HCT116 (cell line): ENCODE measurements at regions of chr17 and their contacts with region 1.

Region 1: DNA sequence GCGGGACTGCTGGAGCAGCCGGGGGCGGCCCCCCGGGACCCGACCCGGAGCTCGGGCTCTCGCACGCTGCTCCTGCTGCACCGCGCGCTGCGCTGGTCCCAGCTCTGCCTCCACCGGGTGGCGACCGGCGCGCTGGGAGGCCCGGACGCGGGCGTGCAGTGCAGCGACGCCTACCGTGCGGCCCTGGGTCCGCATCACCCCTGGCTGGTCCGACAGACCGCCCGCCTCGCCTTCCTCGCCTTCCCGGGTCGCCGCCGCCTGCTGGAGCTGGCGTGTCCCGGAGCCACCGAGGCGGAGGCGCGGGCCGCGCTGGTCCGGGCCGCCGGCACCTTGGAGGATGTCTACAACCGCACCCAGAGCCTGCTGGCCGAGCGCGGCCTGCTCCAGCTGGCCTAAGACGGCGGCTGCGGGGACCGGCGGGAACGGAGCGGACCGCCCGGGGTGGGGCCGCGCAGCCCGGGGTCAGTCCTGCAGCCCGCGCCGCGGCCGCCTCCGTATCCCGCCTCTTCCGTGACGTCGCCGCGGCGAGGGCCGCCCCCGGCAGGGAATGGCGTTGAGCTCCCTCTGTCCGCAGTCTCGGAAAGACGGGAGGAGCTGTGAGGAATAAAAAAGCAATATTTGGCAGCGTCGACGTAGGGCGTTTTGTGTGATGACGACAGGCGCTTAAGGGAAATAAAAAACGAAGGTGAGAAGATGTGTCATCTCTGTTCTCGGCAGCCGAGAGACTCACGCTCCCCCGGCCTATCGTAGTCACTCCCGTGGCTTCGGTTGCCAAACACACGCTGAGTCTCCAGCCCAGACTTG is 1.3 kb downstream of the GLTPD2 start:
- DNase-seq: peak; percentile 88
- ATAC-seq: peak; percentile 90
- H3K4me3 ChIP-seq: peak overlapping the region; percentile 61 to 66
- H3K27ac ChIP-seq: peak overlapping the region; percentile 98
- H3K4me1 ChIP-seq: peaks cover 25 to 36% of the 10 kb centered on the region in 2 experiments
- H3K27me3 ChIP-seq: no peaks in the 10 kb centered on the region
- CTCF ChIP-seq: peak; percentile 50 to 92 (median 74); a peak in 5 of 6 replicates
- POLR2A ChIP-seq: peak; percentile 77
- RAD21 ChIP-seq: peak; percentile 51

Region 2: GRCh38 chr17:4565209-4566141 is 224.6 kb before region 1 on chr17:
- CTCF ChIA-PET with region 1: interaction called, 11 read pairs
- POLR2A ChIA-PET with region 1: no interaction called
- RAD21 ChIA-PET with region 1: no interaction called
- intact Hi-C with region 1: no loop called
- DNase-seq: peak; percentile 84
- ATAC-seq: peak; percentile 84
- H3K4me3 ChIP-seq: no peak overlapping the region
- H3K27ac ChIP-seq: no peak overlapping the region
- H3K4me1 ChIP-seq: peaks cover 3 to 16% of the 10 kb centered on the region in 2 experiments; a peak in 3 of 4 replicates
- H3K27me3 ChIP-seq: no peaks in the 10 kb centered on the region
- CTCF ChIP-seq: peak; percentile 82 to 90 (median 86)
- POLR2A ChIP-seq: no peak
- RAD21 ChIP-seq: peak; percentile 59

Region 3: GRCh38 chr17:4709794-4710692 is 80.1 kb before region 1 on chr17 and contains the start of gene ARRB2:
- CTCF ChIA-PET with region 1: interaction called, 12 read pairs
- POLR2A ChIA-PET with region 1: no interaction called
- RAD21 ChIA-PET with region 1: interaction called in 1 of 2 experiments, 4 read pairs
- intact Hi-C with region 1: no loop called
- DNase-seq: peak; percentile 96
- ATAC-seq: peak; percentile 88
- H3K4me3 ChIP-seq: peak within 1 kb of the TSS; percentile 65 to 73
- H3K27ac ChIP-seq: peak within 1 kb of the TSS; percentile 64
- H3K4me1 ChIP-seq: peaks cover 13 to 45% of the 10 kb centered on the region in 2 experiments; a peak in 3 of 4 replicates
- H3K27me3 ChIP-seq: no peaks in the 10 kb centered on the region
- CTCF ChIP-seq: peak; percentile 45 to 70 (median 59)
- POLR2A ChIP-seq: no peak
- RAD21 ChIP-seq: peak; percentile 83
- total RNA-seq, gene ARRB2: 70.8 TPM

Region 4: DNA sequence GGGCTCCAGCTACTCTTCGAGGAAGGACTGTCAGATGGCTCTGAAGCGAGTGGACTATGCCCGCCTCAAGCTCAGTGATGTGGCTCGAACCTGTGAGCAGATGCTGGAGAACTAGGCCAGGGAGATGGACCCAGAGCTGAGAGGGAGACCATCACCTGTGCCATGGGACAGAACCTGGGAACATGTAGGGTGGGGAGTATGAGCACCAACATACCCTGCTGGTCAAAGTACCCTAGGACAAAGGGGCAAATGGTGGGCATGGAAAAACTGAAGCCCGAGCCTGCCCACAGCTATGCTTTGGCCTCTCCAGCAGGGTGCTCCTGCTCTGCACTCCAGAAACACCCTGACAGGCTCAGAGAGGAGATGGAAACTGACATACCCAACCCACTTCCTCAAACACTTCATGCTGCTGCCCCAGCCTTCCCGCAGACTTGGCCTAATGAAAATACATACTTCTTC is 57.0 kb before region 1 on chr17:
- CTCF ChIA-PET with region 1: interaction called, 11 read pairs
- POLR2A ChIA-PET with region 1: no interaction called
- RAD21 ChIA-PET with region 1: interaction called in 1 of 2 experiments, 6 read pairs
- intact Hi-C with region 1: loop called (anchors 2 kb)
- DNase-seq: no peak
- ATAC-seq: no peak
- H3K4me3 ChIP-seq: no peak overlapping the region
- H3K27ac ChIP-seq: no peak overlapping the region
- H3K4me1 ChIP-seq: peaks cover 5 to 22% of the 10 kb centered on the region in 2 experiments
- H3K27me3 ChIP-seq: no peaks in the 10 kb centered on the region
- CTCF ChIP-seq: peak in 1 of 3 experiments; percentile 29; a peak in 2 of 6 replicates
- POLR2A ChIP-seq: no peak
- RAD21 ChIP-seq: no peak

Region 5: DNA sequence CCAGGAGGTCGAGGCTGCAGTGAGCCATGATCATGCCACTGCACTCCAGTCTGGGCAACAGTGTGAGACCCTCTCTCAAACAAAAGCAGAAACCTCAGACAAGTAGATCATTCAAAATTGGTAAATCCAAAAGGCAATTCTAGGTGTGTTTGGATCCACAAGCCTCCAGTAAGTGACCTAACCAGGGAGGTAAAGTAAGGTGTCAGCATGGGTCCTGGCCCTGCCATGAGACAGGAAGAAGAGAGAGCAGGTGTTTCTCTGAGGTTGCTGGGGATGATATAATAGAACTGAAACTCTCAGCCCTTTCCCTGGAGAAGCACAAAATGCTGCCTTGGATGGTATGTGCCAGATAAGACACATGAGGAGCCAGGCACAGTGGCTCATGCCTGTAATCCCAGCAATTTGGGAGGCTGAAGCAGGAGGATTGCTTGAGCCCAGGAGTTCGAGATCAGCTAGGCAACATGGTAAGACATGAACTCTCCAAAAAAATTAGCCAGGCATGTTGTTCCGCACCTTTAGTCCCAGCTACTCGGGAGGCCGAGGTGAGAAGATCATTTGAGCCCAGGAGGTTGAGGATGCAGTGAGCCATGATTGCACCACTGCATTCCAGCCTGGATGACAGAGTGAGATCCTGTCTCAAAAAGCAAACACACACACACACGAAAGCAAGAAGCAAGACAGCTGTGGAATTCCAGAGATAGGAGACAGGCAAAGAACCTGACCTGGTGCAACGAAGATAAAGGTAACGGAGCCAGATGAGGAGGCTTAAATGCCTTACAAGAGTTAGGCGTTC is 11.9 kb before region 1 on chr17:
- CTCF ChIA-PET with region 1: interaction called, 19 read pairs
- POLR2A ChIA-PET with region 1: no interaction called
- RAD21 ChIA-PET with region 1: no interaction called
- intact Hi-C with region 1: no loop called
- DNase-seq: no peak
- ATAC-seq: no peak
- H3K4me3 ChIP-seq: no peak overlapping the region
- H3K27ac ChIP-seq: no peak overlapping the region
- H3K4me1 ChIP-seq: no peaks in the 10 kb centered on the region
- H3K27me3 ChIP-seq: no peaks in the 10 kb centered on the region
- CTCF ChIP-seq: no peak
- POLR2A ChIP-seq: no peak
- RAD21 ChIP-seq: no peak

Region 6: GRCh38 chr17:4800462-4801196 is 10.5 kb after region 1 on chr17:
- CTCF ChIA-PET with region 1: no interaction called
- POLR2A ChIA-PET with region 1: no interaction called
- RAD21 ChIA-PET with region 1: no interaction called
- intact Hi-C with region 1: no loop called
- DNase-seq: no peak
- ATAC-seq: no peak
- H3K4me3 ChIP-seq: no peak overlapping the region
- H3K27ac ChIP-seq: no peak overlapping the region
- H3K4me1 ChIP-seq: peaks cover 6 to 8% of the 10 kb centered on the region in 2 experiments; a peak in 3 of 4 replicates
- H3K27me3 ChIP-seq: no peaks in the 10 kb centered on the region
- CTCF ChIP-seq: no peak
- POLR2A ChIP-seq: no peak
- RAD21 ChIP-seq: no peak

Region 7: GRCh38 chr17:4881761-4882555 is 91.9 kb after region 1 on chr17:
- CTCF ChIA-PET with region 1: interaction called, 3 read pairs
- POLR2A ChIA-PET with region 1: no interaction called
- RAD21 ChIA-PET with region 1: interaction called in 1 of 2 experiments, 3 read pairs
- intact Hi-C with region 1: loop called (anchors 1 kb)
- DNase-seq: no peak
- ATAC-seq: peak; percentile 98
- H3K4me3 ChIP-seq: no peak overlapping the region
- H3K27ac ChIP-seq: no peak overlapping the region
- H3K4me1 ChIP-seq: no peaks in the 10 kb centered on the region
- H3K27me3 ChIP-seq: no peaks in the 10 kb centered on the region
- CTCF ChIP-seq: peak; percentile 89 to 97 (median 90)
- POLR2A ChIP-seq: no peak
- RAD21 ChIP-seq: peak; percentile 89

Region 8: GRCh38 chr17:4891411-4892342 is 101.6 kb after region 1 on chr17:
- CTCF ChIA-PET with region 1: interaction called, 6 read pairs
- POLR2A ChIA-PET with region 1: no interaction called
- RAD21 ChIA-PET with region 1: no interaction called
- intact Hi-C with region 1: loop called (anchors 1 kb)
- DNase-seq: no peak
- ATAC-seq: no peak
- H3K4me3 ChIP-seq: no peak overlapping the region
- H3K27ac ChIP-seq: no peak overlapping the region
- H3K4me1 ChIP-seq: no peaks in the 10 kb centered on the region
- H3K27me3 ChIP-seq: no peaks in the 10 kb centered on the region
- CTCF ChIP-seq: no peak
- POLR2A ChIP-seq: no peak
- RAD21 ChIP-seq: no peak